Activated T-helper 1 cell treated with anti-CD3 and anti-CD28 coated beads, Interleukin-12 subunit alpha, Interleukin-12 subunit beta, Interleukin-2, Interleukin-4 antibody, amounts not matched to agents 30 ng/mL and 10 ng/mL and 1 ng/mL, durations not matched to agents 14 hours and 24 hours and 36 hours (primary cell): ENCODE measurements at regions of chr1 and their contacts with region 1.

Region 1: DNA sequence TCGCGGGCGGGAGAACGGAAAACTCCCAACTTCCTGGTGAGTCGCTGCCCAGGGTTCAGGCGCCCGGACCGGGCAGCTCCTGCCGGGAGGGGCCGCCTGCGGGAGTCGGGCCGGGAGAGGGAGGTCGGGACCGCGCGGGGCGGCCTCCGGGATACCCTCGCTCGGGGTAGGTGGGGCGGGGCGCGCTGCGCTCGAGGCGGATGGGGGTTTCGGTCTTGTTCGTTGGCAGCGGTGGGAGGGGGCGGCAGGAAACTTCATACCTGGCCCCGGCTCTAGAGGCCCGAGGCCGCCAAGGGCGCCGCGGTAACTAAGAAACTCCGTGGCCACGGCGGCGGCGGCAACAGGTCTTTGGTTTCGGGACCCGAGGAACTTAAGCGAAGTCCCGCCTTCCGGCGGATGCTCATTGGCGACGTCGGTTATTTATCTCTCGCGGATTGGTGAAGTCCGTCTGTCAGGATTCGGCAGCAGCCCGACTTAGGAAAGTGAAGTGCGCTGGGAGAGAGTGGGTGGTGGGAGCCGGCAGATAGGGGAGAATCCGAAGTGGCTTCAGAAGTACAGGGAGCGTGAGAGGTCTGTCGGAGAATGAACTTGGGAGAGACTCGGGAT is 546 bp downstream of the NEK7 start:
- DNase-seq: peak; percentile 76
- H3K4me3 Mint-ChIP-seq: peak overlapping the region; percentile 97
- H3K27ac Mint-ChIP-seq: peak overlapping the region; percentile 96
- H3K4me1 Mint-ChIP-seq: peaks cover 47% of the 10 kb centered on the region
- H3K27me3 Mint-ChIP-seq: no peaks in the 10 kb centered on the region

Region 2: DNA sequence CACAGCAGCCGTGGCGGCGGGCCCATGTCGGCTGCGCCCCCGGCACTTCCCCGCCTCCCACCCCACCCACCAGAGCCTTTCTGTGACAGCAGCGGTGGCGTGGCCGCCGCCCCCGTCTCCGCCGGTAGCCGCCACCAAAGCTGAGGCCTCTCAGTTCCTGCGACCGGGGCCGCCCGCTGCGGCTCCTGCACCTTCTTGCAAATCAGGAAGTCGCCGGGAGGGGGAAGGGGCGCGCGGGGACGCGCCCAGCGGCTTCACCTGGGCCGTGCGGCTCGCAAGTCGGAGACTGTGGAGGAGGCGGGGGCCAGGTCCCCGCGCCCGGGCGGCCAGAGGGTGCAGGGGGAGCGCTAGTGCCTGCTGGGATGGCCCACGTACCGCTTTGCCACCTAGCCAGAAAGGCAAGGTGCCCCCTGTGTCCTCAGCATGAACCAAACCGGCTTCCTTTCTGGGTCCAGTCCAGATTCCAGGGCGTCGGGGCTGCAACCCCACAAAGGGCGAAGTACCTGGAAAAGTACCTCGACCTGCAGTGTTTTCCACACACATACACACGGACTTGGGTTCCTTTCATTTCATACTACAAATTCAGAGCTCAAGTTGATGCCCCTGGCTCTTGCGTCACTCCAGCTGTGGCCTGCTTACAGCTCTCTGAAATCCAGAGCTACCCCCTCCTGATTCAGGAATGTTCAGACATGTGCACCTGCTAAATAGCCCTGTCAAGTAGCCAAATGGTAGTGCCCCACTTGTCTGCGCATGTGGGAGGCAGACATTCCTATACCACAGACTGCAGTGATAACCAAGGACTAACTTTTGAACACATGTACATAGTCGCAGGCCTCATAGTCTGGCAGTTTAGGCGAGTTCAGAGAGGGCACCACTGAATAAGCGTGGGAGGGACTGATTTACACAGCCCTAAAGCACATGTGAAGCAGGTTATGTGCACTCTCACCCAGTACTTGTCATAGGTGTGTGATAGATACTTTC is 381.8 kb before region 1 on chr1 and contains the start of gene DENND1B:
- intact Hi-C with region 1: loop called (anchors 5 kb)
- DNase-seq: peak; percentile 80
- H3K4me3 Mint-ChIP-seq: peak within 1 kb of the TSS; percentile 85
- H3K27ac Mint-ChIP-seq: peak within 1 kb of the TSS; percentile 95
- H3K4me1 Mint-ChIP-seq: peaks cover 72% of the 10 kb centered on the region
- H3K27me3 Mint-ChIP-seq: no peaks in the 10 kb centered on the region
- total RNA-seq, gene DENND1B: 15.3 and 16.5 TPM in 2 replicates

Region 3: DNA sequence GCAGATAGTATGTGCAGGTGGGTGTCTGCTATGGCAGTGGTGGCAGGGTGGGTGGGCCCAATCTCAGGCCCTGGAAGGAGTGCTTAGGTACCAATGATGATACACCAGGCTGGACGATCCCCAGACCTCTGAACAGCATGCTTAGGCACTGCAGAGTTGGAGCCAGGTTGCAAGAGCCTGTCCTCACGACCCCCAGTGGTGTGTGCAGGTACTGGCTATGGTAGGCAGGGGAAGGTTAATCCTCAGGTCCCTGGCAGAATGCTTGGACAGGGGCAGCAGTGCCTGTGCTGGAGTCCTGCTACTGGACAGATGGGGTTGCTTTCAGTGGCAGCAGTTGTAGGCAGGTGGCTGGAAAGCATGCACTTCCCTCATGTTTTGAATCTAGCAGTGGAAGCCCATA is 101.1 kb before region 1 on chr1:
- intact Hi-C with region 1: no loop called
- DNase-seq: no peak
- H3K4me3 Mint-ChIP-seq: no peak overlapping the region
- H3K27ac Mint-ChIP-seq: no peak overlapping the region
- H3K4me1 Mint-ChIP-seq: no peaks in the 10 kb centered on the region
- H3K27me3 Mint-ChIP-seq: peaks cover 12% of the 10 kb centered on the region

Region 4: GRCh38 chr1:198102454-198102827 is 54.9 kb before region 1 on chr1:
- intact Hi-C with region 1: loop called (anchors 5 kb)
- DNase-seq: no peak
- H3K4me3 Mint-ChIP-seq: peak overlapping the region; percentile 60
- H3K27ac Mint-ChIP-seq: peak overlapping the region; percentile 68
- H3K4me1 Mint-ChIP-seq: peaks cover 26% of the 10 kb centered on the region
- H3K27me3 Mint-ChIP-seq: no peaks in the 10 kb centered on the region

Region 5: DNA sequence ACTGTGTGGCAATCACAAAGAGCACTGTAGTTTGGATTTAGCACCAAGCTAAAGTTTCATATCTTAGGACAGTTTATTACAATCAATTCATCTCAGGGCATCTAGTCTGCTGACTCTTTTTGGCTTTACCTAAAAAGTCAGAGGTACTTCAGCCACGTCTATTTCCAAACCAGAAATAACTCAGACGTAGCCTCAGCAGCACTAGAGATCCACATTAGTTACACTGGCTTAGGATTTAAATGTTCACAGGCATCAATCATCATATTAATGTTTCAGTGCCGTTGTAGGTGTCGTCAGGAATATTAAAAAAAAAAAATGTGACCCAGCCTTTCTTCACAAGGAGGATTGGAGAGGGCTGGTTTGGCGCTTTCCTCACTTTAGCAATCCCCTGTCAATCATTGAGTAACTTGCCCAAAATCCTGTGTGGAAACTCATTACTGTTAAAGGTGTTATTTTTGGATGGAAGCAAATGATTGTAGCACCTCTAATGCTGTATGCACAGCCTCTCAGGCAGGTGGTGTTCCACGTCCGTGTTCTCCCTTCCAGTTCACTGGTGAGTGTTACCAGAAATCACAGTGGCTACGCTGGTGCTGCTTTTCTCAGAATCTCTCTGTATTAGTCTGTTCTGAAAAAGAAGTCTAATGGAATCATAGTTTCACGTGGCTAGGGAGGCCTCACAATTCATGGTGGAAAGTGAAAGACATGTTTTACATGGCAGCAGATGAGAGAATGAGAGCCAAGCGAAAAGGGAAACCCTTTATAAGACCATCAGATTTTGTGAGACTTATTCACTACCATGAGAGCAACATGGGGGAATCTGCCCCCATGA is 44.8 kb after region 1 on chr1:
- intact Hi-C with region 1: loop called (anchors 1 kb)
- DNase-seq: no peak
- H3K4me3 Mint-ChIP-seq: peak overlapping the region; percentile 76
- H3K27ac Mint-ChIP-seq: peak overlapping the region; percentile 78
- H3K4me1 Mint-ChIP-seq: peaks cover 68% of the 10 kb centered on the region
- H3K27me3 Mint-ChIP-seq: no peaks in the 10 kb centered on the region

Region 6: DNA sequence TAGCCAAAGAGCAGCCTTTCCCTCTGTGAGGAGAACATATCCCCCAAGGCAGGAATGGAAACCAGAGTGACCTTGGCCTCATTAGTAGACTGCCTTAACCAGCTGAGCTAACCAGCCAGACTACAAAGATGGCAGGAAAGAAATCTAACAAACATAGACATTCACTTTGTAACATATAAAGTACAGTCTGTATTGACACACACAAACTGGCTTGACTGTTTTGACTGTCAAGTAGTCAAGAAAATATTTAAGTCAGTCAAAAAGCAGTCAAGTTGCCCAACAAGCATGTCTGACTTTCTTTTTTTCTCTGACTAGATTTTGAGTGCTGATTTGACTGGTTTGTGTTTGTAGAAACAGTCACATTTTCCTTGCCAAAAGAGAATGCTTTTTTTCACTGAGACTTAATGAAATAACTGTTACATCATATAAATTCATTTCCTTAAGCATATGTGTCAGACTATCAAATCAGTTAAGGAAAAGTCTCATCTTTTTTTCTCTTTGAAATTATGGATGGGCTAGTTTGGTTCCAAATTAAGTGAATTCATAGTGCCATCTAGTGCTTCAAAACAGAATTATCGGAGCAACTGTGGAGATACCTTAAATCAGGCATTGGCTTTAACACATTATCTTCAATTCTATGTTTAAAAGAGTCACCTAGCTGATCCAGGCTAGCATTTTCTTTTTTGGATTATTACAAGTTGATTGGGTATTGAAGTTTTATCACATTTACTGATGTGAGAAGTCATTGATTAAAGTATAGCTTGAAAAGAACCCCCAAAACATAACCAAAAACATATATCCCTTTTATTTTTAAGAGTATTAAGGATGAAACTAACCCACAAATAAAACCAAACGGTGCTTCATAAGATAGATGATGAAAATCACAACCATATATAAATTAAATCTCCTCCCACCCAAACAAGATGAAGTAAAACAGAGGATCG is 308.1 kb after region 1 on chr1:
- intact Hi-C with region 1: loop called (anchors 2 kb)
- DNase-seq: no peak
- H3K4me3 Mint-ChIP-seq: no peak overlapping the region
- H3K27ac Mint-ChIP-seq: no peak overlapping the region
- H3K4me1 Mint-ChIP-seq: peaks cover 13% of the 10 kb centered on the region
- H3K27me3 Mint-ChIP-seq: no peaks in the 10 kb centered on the region

Region 7: DNA sequence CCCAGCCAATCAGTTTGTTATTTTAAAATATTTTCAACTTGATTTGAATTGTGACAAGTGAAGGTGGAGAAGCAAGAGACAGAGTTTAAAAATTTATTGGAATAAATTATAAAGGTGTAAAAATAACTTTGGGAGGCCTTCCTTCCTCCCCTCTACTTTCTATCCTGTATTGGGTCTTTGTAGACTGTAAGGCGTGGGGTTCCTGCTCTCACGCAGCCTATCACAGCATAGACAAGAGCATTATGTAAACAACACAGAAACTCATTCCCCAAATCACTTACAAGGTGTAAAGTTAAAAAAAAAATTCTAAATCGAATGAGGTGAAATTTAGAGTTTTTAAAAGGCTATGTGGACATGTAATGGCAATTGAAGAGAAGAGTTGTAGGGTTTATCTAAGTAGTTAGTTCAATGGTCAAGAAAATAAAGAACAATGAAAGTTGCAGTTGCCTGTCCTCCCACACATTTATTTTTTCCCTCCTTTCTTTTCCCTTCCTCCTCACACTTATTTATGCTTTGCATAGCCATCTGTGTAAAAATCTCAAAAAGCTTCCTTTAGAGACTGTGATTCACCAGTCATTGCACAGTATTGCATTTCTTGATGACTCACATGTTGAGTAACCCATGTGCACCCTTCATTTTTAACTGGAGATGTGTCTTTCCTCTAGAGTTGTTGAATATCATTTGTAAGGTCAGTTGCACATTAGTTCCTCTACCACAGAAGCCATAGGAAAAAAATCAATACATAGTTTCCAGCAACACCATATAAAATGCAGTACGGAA is 723.7 kb after region 1 on chr1:
- intact Hi-C with region 1: loop called (anchors 5 kb)
- DNase-seq: no peak
- H3K4me3 Mint-ChIP-seq: no peak overlapping the region
- H3K27ac Mint-ChIP-seq: peak overlapping the region; percentile 71
- H3K4me1 Mint-ChIP-seq: peaks cover 59% of the 10 kb centered on the region
- H3K27me3 Mint-ChIP-seq: no peaks in the 10 kb centered on the region